OCI-LY7 (cell line): ENCODE measurements at regions of chr1 and their contacts with region 1.

Region 1: DNA sequence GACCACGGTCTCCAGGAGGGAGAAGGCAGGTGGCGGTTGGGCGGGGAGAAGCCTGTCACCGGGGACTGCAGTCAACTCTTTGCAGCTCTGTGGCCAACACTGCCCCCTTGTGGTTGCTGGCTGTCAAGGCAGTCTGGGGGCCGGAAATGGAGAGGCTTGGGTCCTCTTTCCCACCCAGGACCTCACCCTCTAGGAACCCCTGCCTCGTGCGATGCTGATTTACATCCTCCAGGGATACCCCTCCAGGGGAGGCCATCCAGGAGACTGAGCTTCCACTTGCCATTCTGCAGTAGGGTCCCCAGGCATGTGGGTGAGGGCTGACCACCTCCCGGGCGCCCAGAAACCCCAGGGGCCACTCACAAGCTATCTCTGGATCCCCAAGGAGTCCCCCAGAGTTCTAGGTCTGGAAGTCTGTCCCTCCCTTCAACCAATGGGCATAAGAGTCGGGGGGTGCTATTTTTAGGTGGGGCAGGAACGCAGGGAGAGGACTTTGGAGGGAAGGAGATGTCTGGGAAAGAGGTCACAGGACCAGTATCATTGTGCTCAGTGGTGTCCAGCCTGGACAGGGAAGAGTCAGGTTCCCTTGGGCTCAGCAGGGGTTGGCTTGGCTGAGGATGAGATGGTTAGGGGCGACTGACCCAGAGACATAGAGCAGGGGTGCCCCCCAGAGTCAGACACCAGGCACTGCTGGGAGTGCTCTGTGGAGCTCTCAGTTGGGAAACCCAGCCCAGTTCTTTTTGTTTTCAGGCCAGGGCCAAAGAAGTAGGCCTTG is 7.1 kb upstream of the GPR61 start:
- DNase-seq: peak; percentile 85
- H3K4me3 ChIP-seq: peak overlapping the region; percentile 58
- H3K27ac ChIP-seq: peak overlapping the region; percentile 32
- H3K4me1 ChIP-seq: peaks cover 6% of the 10 kb centered on the region
- CTCF ChIP-seq: peak; percentile 79

Region 2: GRCh38 chr1:109201123-109201703 is 331.3 kb before region 1 on chr1:
- CTCF ChIA-PET with region 1: no interaction called
- POLR2A ChIA-PET with region 1: no interaction called
- intact Hi-C with region 1: loop called (anchors 1 kb)
- DNase-seq: peak; percentile 70
- H3K4me3 ChIP-seq: no peak overlapping the region
- H3K27ac ChIP-seq: no peak overlapping the region
- H3K4me1 ChIP-seq: no peaks in the 10 kb centered on the region
- CTCF ChIP-seq: peak; percentile 90

Region 3: GRCh38 chr1:109263597-109264398 is 268.8 kb before region 1 on chr1:
- CTCF ChIA-PET with region 1: no interaction called
- POLR2A ChIA-PET with region 1: no interaction called
- intact Hi-C with region 1: loop called (anchors 1 kb)
- DNase-seq: peak; percentile 76
- H3K4me3 ChIP-seq: no peak overlapping the region
- H3K27ac ChIP-seq: no peak overlapping the region
- H3K4me1 ChIP-seq: no peaks in the 10 kb centered on the region
- CTCF ChIP-seq: peak; percentile 93

Region 4: DNA sequence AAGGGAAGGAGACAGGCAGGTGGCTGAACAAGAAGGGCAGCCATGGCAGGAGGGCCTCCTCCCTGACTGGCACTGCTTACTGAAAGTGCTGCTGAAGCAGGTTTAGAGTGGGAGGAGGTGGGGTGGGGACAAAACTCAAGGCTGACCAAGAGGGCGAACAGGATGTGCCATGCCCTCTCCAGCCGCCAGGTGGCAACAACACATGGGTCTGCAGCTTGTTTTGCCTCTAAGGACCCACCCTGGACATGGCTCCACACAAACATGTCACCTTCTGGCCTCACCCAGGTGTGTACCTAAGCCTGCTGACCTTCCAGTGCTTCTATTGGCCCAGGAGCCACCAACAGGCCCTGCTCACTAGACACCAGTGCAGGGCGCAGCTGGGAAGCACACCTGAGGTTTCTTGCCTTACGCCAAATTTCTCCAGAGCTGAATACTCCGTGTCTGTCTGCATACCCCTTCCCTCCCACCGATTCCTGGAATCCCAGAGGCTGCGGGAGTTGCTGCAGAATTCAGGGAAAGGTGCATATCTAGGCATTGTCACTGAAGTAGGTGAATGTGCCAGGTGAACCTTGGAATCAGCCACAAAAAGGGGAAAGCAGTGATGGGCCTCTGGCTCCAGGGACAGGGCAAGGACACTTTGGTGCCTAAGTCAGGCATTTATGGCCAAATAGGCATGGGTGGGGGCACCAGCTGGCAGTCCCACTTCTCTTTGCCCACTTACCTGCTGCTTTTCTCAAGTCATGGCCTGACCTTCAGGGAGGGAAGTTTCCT is 254.9 kb before region 1 on chr1:
- CTCF ChIA-PET with region 1: no interaction called
- POLR2A ChIA-PET with region 1: interaction called, 3 read pairs
- intact Hi-C with region 1: loop called (anchors 1 kb)
- DNase-seq: peak; percentile 83
- H3K4me3 ChIP-seq: no peak overlapping the region
- H3K27ac ChIP-seq: no peak overlapping the region
- H3K4me1 ChIP-seq: peaks cover 12% of the 10 kb centered on the region
- CTCF ChIP-seq: peak; percentile 92

Region 5: GRCh38 chr1:109426278-109427170 is 106.0 kb before region 1 on chr1 and contains the start of gene PSMA5:
- CTCF ChIA-PET with region 1: no interaction called
- POLR2A ChIA-PET with region 1: interaction called, 5 read pairs
- intact Hi-C with region 1: loop called (anchors 1 kb)
- DNase-seq: peak; percentile 99
- H3K4me3 ChIP-seq: peak within 1 kb of the TSS; percentile 97
- H3K27ac ChIP-seq: peak within 1 kb of the TSS; percentile 85
- H3K4me1 ChIP-seq: peaks cover 25% of the 10 kb centered on the region
- CTCF ChIP-seq: no peak
- total RNA-seq, gene PSMA5: 46.3 and 53.3 TPM in 2 replicates

Region 6: DNA sequence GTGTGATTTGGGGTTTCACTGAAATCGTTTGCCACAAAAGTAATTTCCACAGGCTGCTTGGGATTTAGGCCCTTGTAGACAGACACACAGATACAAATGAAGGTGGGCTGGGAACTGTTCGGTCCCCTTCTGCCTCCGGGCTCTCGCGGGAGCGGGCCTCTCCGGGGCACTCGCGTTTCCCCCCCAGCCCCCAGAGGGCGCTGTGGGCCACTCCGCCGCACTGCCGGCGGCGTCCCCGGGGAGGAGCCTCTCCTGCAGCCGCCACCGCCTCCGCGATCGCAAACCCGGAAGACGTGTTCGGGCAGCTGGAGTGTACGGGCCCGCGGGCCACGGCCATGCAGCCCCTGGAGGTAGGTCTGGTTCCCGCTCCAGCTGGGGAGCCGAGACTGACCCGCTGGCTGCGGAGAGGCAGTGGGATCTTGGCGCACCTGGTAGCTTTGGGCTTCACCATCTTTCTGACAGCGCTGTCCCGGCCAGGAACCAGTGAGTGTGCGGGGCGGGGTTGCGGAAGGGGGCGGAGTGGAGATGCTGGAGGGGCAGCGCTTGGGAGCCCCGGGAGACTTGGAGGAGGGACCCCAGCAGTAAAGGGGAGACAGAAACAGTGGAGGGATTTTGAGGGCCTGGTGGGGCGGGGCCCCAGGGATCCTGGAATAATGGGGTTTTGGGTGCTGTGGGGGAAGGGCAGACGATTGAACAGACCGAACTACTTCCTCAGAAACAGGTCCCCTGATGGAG is 38.6 kb before region 1 on chr1 and contains the start of gene CYB561D1:
- CTCF ChIA-PET with region 1: interaction called, 35 read pairs
- POLR2A ChIA-PET with region 1: interaction called, 4 read pairs
- intact Hi-C with region 1: loop called (anchors 1 kb)
- DNase-seq: peak; percentile 91
- H3K4me3 ChIP-seq: peak within 1 kb of the TSS; percentile 95
- H3K27ac ChIP-seq: peak within 1 kb of the TSS; percentile 68
- H3K4me1 ChIP-seq: peaks cover 14% of the 10 kb centered on the region
- CTCF ChIP-seq: peak; percentile 94
- total RNA-seq, gene CYB561D1: 5.8 and 6.2 TPM in 2 replicates